Naive thymus-derived CD8-positive, alpha-beta T cell (primary cell): ENCODE measurements at regions of chr5 and their contacts with region 1.

Region 1: DNA sequence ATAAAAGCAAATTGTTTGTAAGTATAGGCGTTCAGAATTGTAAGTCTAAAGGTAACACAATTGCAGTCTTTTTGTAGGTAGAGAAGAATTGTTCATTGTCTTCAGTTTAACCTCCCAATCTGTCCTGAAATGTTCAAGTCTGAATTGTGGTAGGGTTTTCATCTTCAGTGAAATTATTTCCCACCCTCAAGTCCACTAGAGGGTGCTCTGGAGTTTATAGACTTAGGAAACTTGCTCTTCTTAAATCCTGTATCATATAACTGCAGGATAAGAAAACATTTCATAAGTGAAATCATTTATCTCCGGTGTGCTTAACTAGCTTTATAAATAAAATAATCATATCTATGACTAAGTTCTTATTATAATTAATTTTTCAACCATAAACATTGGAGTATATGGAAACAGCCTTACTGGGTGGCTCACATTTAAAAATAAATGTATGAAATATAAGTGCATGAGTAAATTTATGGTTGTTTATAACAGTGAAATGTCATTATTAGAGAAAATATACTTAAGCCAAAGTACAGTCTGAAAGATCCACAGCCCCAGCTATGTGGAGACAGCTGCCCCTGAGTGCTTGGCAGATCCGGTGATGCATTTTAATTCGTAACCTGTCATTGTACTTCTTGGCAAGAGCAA is 182.4 kb upstream of the OTULINL start:
- DNase-seq: peak in 5 of 10 donors; percentile 24 to 67 (median 63)
- ATAC-seq: peak; percentile 60 to 61
- H3K4me3 Mint-ChIP-seq: no peak overlapping the region
- H3K27ac Mint-ChIP-seq: no peak overlapping the region
- H3K4me1 Mint-ChIP-seq: peaks cover 10 to 36% (median 21%) of the 10 kb centered on the region in 4 donors
- H3K27me3 Mint-ChIP-seq: no peaks in the 10 kb centered on the region

Region 2: DNA sequence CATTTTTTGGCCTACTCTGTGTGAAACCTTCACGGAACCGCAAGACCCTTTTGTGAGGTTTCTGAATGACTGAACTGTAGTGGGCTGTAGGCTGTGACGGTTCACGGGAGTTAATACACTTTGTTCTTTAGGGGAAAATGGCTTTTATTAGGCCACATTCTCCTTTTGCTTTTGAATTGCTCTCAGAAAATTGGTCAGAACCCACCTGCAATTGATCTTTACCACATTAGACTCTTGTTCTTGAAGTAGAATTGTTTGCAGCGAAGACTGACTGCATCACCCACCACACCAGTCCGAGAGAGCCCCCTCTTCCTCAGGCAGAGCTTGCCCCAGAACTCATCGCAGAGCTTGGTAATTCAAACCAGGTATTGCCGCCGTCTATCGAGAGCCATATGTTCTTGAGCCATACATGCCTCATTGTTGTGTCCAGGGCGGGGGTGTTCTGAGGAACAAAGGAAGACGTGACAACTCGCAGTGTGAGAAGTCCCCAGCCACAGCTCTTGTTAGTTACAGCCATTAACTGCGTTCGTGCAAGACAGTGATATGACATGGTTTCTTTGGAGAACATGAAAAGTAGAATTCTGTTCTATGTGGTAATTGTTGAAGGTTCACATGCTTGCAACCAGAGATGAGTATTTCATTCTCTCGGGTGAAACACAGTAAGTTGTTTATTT is 16.0 kb after region 1 on chr5:
- POLR2A ChIA-PET with region 1: interaction called, 12 read pairs
- DNase-seq: peak in 3 of 10 donors; percentile 15 to 33 (median 19)
- ATAC-seq: peak in 1 of 2 donors; percentile 15
- H3K4me3 Mint-ChIP-seq: peak overlapping the region; percentile 4 to 86 (median 70)
- H3K27ac Mint-ChIP-seq: peak overlapping the region; percentile 87 to 98 (median 94)
- H3K4me1 Mint-ChIP-seq: peaks cover 21 to 46% (median 39%) of the 10 kb centered on the region in 4 donors
- H3K27me3 Mint-ChIP-seq: no peaks in the 10 kb centered on the region